H1 (cell line): ENCODE measurements at regions of chr4 and their contacts with region 1.

Region 1: DNA sequence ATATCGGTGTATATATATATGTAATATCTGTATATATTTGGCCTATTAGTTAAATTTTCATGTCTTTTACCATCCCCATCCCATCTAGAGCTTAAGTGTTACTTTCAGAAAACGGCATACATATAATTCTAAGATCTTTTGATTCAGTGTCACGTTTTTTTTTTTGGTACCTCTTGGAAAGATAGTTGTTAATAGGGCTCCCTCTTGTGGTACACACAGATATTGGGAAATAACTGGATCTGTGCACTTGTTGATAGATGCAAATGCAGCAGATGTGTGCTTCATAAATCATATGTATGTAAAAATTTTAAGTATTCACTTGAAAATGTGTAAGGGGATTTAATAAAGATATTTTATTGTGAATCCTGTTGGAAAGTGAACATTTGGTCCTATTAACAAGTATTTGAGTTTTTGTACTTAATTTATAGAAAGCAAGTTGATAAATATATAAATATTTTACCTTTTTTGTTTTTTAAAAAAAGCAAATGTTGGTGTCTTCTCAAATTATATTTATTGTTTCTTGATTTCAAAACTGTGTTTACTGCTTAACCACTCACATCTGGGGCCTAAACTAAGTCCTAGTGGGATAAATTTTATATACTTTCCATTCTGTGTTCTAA is 74.7 kb downstream of the PAQR3 start:
- DNase-seq: no peak
- H3K4me3 ChIP-seq: no peak overlapping the region
- H3K27ac ChIP-seq: no peak overlapping the region
- H3K4me1 ChIP-seq: no peaks in the 10 kb centered on the region
- H3K27me3 ChIP-seq: no peaks in the 10 kb centered on the region
- CTCF ChIP-seq: peak in 2 of 3 experiments; percentile 50 to 60; a peak in 2 of 4 replicates
- EP300 ChIP-seq: no peak
- POLR2A ChIP-seq: no peak
- RAD21 ChIP-seq: peak; percentile 79

Region 2: GRCh38 chr4:78629991-78630541 is 234.4 kb before region 1 on chr4:
- CTCF ChIA-PET with region 1: interaction called, 10 read pairs
- POLR2A ChIA-PET with region 1: no interaction called
- DNase-seq: no peak
- H3K4me3 ChIP-seq: no peak overlapping the region
- H3K27ac ChIP-seq: no peak overlapping the region
- H3K4me1 ChIP-seq: no peaks in the 10 kb centered on the region
- H3K27me3 ChIP-seq: no peaks in the 10 kb centered on the region
- CTCF ChIP-seq: no peak
- EP300 ChIP-seq: no peak
- POLR2A ChIP-seq: no peak
- RAD21 ChIP-seq: no peak

Region 3: DNA sequence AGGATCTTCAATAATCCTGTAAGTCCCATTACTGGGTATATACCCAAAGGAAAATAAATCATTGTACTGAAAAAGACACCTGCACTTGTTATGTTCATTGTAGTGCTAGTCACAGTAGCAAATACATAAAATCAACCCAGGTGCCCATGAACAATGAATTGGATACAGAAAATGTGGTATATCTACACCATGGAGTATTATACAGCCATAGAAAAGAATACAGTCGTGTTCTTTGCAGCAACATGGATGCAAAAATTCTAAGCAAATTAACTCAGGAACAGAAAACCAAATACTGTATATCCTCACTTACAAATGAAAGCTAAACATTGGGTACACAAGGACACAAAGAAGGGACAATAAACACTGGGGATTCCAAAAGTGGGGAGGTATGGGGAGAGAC is 189.2 kb before region 1 on chr4:
- CTCF ChIA-PET with region 1: no interaction called
- POLR2A ChIA-PET with region 1: no interaction called
- DNase-seq: no peak
- H3K4me3 ChIP-seq: no peak overlapping the region
- H3K27ac ChIP-seq: no peak overlapping the region
- H3K4me1 ChIP-seq: no peaks in the 10 kb centered on the region
- H3K27me3 ChIP-seq: no peaks in the 10 kb centered on the region
- CTCF ChIP-seq: no peak
- EP300 ChIP-seq: no peak
- POLR2A ChIP-seq: no peak
- RAD21 ChIP-seq: no peak

Region 4: GRCh38 chr4:78911595-78911994 is 47.1 kb after region 1 on chr4:
- CTCF ChIA-PET with region 1: no interaction called
- POLR2A ChIA-PET with region 1: no interaction called
- DNase-seq: no peak
- H3K4me3 ChIP-seq: no peak overlapping the region
- H3K27ac ChIP-seq: no peak overlapping the region
- H3K4me1 ChIP-seq: no peaks in the 10 kb centered on the region
- H3K27me3 ChIP-seq: no peaks in the 10 kb centered on the region
- CTCF ChIP-seq: no peak
- EP300 ChIP-seq: no peak
- POLR2A ChIP-seq: no peak
- RAD21 ChIP-seq: no peak